AG04449 (cell line): ENCODE measurements at regions of chr7 and their contacts with region 1.

Region 1: DNA sequence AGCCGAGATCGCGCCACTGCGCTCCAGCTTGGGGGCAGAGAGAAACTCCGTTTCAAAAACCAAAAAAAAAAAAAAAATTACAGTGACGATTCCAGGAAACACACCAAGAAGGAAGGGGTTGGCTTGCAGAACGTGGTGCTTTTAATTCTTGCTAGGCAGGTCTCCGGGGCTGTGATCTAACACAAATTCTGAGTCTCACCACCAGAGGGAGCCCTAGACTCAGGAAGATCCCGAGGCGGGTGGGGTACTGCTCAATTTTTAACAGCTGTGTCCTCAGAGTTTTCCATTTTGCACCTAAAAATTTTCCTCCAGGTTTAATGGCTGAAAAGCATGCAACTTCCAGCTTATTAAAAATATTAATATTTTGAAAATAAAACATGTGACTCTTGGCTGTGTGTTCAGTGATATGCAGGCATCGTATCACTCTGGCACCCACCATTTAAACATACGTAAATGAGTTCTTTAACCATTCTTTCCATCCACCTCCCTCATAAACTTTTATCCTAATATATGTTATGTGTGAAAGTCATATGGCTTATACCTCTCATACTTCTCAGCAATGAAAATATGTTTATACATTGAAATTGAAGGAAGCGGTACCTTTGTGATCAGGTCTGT is 26.5 kb upstream of the NUB1 start:
- DNase-seq: no peak
- H3K4me3 ChIP-seq: no peak overlapping the region
- CTCF ChIP-seq: peak; percentile 63

Region 2: GRCh38 chr7:151244196-151244840 is 70.8 kb before region 1 on chr7:
- CTCF ChIA-PET with region 1: interaction called, 15 read pairs
- POLR2A ChIA-PET with region 1: no interaction called
- DNase-seq: no peak
- H3K4me3 ChIP-seq: peak overlapping the region; percentile 43; the same call in 1 of the 2 replicates
- CTCF ChIP-seq: peak; percentile 76

Region 3: GRCh38 chr7:151327659-151328058 is 12.5 kb after region 1 on chr7:
- CTCF ChIA-PET with region 1: interaction called, 104 read pairs
- POLR2A ChIA-PET with region 1: no interaction called
- DNase-seq: no peak
- H3K4me3 ChIP-seq: no peak overlapping the region
- CTCF ChIP-seq: no peak

Region 4: GRCh38 chr7:151341357-151342101 is 26.4 kb after region 1 on chr7 and contains the start of gene NUB1:
- CTCF ChIA-PET with region 1: interaction called, 49 read pairs
- POLR2A ChIA-PET with region 1: no interaction called
- DNase-seq: no peak
- H3K4me3 ChIP-seq: peak within 1 kb of the TSS; percentile 76
- CTCF ChIP-seq: no peak

Region 5: DNA sequence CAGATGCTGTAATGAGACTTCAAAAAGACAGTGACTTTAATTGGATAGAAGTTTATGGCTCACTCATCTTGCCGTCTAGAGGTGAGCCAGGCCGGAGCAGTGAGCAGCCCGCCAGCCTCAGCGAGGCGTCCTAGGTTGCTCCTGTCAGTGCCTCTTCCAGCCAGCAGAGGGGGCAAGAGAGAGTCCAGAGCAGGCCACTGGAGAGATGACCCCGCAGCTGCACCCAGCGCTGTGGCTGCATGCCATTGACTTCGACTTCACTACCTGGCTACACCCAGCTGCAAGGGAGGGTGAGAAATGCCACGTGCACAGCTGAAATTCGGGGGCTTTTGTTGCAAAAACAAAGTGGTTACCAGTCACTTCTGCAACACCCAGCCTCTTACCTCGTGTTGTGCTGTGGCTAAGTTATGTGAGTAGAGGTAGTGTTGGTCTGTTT is 53.0 kb after region 1 on chr7:
- CTCF ChIA-PET with region 1: interaction called, 10 read pairs
- POLR2A ChIA-PET with region 1: no interaction called
- DNase-seq: no peak
- H3K4me3 ChIP-seq: no peak overlapping the region
- CTCF ChIP-seq: peak; percentile 95

Region 6: DNA sequence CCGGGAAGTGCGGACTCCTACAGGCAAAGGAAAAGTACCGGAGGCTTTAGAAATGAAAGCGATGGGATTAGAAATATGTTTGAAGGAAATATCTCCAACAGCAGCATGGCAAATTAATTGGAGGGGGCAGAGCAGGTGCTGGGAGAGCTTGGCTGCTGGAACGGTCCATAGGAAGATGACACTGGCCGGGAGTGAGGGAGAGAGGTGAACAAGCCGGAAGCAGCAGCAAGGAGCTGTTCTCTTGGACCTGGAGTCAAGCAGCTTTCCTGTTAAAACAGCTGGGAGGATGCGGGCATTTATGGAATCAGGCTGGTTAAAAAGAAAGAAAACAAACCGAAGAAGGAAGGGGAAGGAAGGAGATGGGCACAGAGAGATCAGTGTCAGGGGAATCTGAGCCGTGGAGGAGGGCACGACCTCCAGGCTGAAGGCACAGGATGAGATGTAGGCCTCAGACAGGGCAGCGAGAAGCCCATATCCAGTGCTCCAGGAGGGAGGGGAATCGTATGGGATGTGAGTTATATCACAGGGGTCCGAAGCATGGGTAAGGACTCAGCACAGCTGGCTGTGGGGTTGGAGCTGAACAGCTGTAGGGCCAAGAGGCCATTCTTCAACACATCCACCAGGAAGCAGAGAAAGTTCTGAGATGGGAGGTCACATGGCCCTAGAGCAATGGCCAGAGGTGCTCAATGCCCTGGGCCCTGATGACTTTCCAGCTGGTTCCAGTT is 310.5 kb after region 1 on chr7:
- CTCF ChIA-PET with region 1: no interaction called
- POLR2A ChIA-PET with region 1: no interaction called
- DNase-seq: no peak
- H3K4me3 ChIP-seq: no peak overlapping the region
- CTCF ChIP-seq: no peak

Region 7: GRCh38 chr7:151775547-151776443 is 460.6 kb after region 1 on chr7:
- CTCF ChIA-PET with region 1: interaction called, 10 read pairs
- POLR2A ChIA-PET with region 1: no interaction called
- DNase-seq: no peak
- H3K4me3 ChIP-seq: no peak overlapping the region
- CTCF ChIP-seq: no peak